ENCODE measurements at regions of chr12 and their contacts with region 1.

Region 1: GRCh38 chr12:100827901-100828520 is 33.4 kb downstream of the ANO4 start:
- DNase-seq: no peak
- H3K4me3 Mint-ChIP-seq: no peak overlapping the region
- H3K27ac Mint-ChIP-seq: no peak overlapping the region
- H3K4me1 Mint-ChIP-seq: no peaks in the 10 kb centered on the region
- H3K27me3 Mint-ChIP-seq: no peaks in the 10 kb centered on the region

Region 2: GRCh38 chr12:99386907-99387306 is 1441.1 kb before region 1 on chr12:
- intact Hi-C with region 1: no loop called
- DNase-seq: no peak
- H3K4me3 Mint-ChIP-seq: no peak overlapping the region
- H3K27ac Mint-ChIP-seq: no peak overlapping the region
- H3K4me1 Mint-ChIP-seq: no peaks in the 10 kb centered on the region
- H3K27me3 Mint-ChIP-seq: no peaks in the 10 kb centered on the region

Region 3: GRCh38 chr12:100987552-100988521 is 159.8 kb after region 1 on chr12:
- intact Hi-C with region 1: no loop called
- DNase-seq: no peak
- H3K4me3 Mint-ChIP-seq: no peak overlapping the region
- H3K27ac Mint-ChIP-seq: no peak overlapping the region
- H3K4me1 Mint-ChIP-seq: peaks cover 6% of the 10 kb centered on the region
- H3K27me3 Mint-ChIP-seq: no peaks in the 10 kb centered on the region

Region 4: GRCh38 chr12:101238800-101239329 is 410.9 kb after region 1 on chr12:
- intact Hi-C with region 1: no loop called
- DNase-seq: no peak
- H3K4me3 Mint-ChIP-seq: no peak overlapping the region
- H3K27ac Mint-ChIP-seq: no peak overlapping the region
- H3K4me1 Mint-ChIP-seq: no peaks in the 10 kb centered on the region
- H3K27me3 Mint-ChIP-seq: peaks cover 4% of the 10 kb centered on the region

Region 5: GRCh38 chr12:101323255-101323654 is 495.2 kb after region 1 on chr12:
- intact Hi-C with region 1: loop called (anchors 5 kb)
- DNase-seq: no peak
- H3K4me3 Mint-ChIP-seq: no peak overlapping the region
- H3K27ac Mint-ChIP-seq: no peak overlapping the region
- H3K4me1 Mint-ChIP-seq: no peaks in the 10 kb centered on the region
- H3K27me3 Mint-ChIP-seq: no peaks in the 10 kb centered on the region

Measured in activated CD4-positive, alpha-beta T cell treated with anti-CD3 and anti-CD28 coated beads, Interleukin-2, amount 10 ng/mL, durations not matched to agents 24 days and 14 days (primary cell).